Activated T-helper 2 cell treated with anti-CD3 and anti-CD28 coated beads, Interferon-gamma antibody, Interleukin-2, Interleukin-4, amounts not matched to agents 10 μg/mL and 5 μg/mL and 100 μg/mL, durations not matched to agents 14 hours and 24 hours and 36 hours (primary cell): ENCODE measurements at regions of chr6 and their contacts with region 1.

Region 1: DNA sequence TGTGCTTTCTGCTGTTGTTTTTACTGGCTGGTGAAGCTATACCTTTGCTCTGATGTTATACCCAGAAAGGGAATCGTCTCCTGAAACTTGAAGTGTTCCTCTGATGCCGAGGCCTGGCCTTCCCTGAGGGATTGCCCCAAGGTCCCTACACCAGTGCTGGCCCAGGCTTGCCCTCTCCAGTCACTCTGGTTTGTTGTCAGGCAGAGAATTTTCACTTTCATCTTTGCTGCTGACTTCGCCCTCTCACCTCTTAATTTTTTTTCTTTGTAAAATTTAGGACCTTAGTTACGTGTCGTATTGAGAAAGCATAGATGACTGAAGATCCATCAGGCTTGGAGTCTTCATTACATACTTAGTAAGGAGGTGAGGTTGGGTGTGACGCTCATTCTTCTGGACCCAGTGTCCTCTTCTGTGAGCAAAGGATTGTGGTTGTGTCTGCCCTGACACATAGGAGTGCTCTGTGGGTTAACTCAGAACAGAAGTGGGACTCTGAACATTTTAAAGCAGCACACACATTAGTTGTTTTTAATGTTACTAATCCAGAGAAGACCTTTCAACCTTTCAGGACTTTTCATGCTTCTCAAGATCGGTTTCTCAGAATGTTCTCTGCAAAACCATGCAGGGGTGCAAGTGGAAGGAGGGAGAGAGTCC is 45.4 kb downstream of the TULP4 start:
- DNase-seq: no peak
- H3K4me3 Mint-ChIP-seq: peak overlapping the region; percentile 41
- H3K27ac Mint-ChIP-seq: peak overlapping the region; percentile 78
- H3K4me1 Mint-ChIP-seq: peaks cover 41% of the 10 kb centered on the region
- H3K27me3 Mint-ChIP-seq: no peaks in the 10 kb centered on the region

Region 2: DNA sequence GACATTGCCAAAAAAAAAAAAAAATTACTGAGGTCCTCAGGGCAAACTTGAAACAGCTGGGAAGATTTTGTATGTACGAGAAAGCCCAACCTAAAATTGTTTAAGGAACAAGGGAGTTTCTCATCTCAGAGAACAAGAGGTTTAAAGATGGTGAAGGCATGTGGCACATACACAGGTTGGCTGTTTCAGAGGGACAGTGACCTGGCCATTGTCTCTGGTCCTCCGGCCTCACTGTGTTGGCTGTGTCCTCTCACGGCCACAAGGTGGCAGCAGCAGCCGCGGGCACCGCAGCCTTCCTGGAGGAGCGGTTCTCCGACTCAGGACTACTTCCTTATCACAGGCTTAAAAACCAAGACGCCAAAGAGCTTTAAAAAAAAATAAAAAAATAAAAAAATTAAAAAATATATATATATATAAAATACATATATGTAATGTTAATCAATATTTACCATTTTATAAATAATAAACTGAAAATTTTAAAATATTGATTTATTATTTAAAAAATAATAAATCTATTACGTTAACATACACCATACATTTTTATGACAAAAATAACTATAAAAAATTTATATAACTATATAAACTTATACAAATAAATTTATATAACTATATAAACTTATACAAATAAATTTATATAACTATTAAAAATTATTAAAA is 136.8 kb before region 1 on chr6:
- intact Hi-C with region 1: loop called (anchors 5 kb)
- DNase-seq: peak; percentile 61
- H3K4me3 Mint-ChIP-seq: no peak overlapping the region
- H3K27ac Mint-ChIP-seq: no peak overlapping the region
- H3K4me1 Mint-ChIP-seq: no peaks in the 10 kb centered on the region
- H3K27me3 Mint-ChIP-seq: no peaks in the 10 kb centered on the region

Region 3: DNA sequence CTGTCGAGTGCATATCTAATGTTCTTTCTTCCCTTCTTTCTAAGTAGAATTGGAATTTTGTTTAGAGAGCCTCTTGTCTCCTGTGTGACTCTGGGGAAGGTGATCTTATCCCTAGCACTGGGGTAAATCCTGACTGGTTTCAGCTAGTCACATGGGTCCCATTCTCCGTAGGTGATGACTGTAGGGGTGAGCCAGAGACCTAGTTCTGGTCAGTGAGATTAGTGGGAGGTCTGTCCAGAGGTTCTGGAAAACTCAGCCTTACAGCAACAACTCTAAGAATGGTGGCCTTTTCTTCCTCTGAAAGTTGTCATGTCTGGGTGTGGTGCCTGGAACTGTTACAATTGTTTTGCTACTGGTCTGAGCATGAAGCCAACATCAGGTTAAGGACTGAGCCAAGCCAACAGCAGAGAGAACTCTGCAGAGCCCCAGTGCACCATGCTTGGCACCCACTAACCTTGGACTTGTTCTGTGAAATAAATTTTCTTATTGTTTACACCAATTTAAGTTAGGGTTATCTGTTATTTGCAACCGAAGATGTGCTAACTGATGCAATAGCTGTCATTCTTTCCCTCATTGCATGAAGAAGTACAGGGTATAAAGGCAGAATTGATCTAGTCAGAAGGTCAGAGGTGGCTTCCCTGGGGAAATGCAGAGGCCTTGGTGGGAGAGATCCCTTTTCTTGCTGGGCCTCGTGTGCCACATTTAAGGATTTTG is 102.3 kb before region 1 on chr6:
- intact Hi-C with region 1: no loop called
- DNase-seq: no peak
- H3K4me3 Mint-ChIP-seq: no peak overlapping the region
- H3K27ac Mint-ChIP-seq: no peak overlapping the region
- H3K4me1 Mint-ChIP-seq: peaks cover 14% of the 10 kb centered on the region
- H3K27me3 Mint-ChIP-seq: no peaks in the 10 kb centered on the region

Region 4: GRCh38 chr6:158270389-158271127 is 87.1 kb before region 1 on chr6:
- intact Hi-C with region 1: loop called (anchors 2 kb)
- DNase-seq: no peak
- H3K4me3 Mint-ChIP-seq: no peak overlapping the region
- H3K27ac Mint-ChIP-seq: peak overlapping the region; percentile 49
- H3K4me1 Mint-ChIP-seq: peaks cover 25% of the 10 kb centered on the region
- H3K27me3 Mint-ChIP-seq: no peaks in the 10 kb centered on the region

Region 5: DNA sequence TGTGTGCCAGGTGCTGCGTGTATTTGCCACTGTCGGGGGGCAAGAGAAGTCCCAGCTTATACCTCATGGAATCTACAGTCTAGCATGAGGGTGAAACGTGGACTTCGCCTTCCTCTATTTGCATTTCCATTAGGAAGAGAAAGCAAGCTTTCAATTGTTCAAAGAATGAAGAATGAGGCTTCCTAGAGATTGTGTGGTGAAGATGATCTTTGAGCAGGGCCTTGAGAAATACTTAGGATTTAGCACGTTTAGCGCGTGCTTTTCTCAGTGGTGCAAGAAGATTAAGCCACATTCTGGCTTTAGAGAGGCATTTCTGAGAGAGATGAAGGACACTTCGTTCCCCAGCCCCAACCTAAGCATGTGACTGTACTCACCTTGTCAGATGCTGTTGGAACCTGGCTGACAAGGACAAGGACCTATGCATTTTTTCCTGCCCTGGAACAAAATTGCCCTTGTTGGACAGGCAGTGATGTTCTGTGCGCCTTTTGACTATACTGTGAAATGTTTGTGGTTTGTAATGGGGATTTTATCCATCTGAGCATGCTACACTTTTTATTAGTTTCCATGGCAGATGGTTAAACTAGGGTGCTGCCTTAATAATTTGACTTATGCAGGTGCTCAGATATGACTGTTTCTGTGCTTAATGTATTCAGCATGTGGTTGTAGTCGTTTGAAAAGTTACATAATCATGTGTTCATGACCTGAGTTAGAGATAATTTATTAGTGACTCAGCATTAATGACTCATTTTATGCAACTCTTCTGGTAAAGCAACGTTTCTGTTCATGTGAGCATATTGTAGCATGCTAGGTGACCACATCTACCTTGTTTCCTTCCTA is 34.7 kb before region 1 on chr6:
- intact Hi-C with region 1: loop called (anchors 5 kb)
- DNase-seq: no peak
- H3K4me3 Mint-ChIP-seq: no peak overlapping the region
- H3K27ac Mint-ChIP-seq: peak overlapping the region; percentile 8
- H3K4me1 Mint-ChIP-seq: peaks cover 52% of the 10 kb centered on the region
- H3K27me3 Mint-ChIP-seq: no peaks in the 10 kb centered on the region

Region 6: GRCh38 chr6:158518191-158519127 is 160.8 kb after region 1 on chr6:
- intact Hi-C with region 1: loop called (anchors 5 kb)
- DNase-seq: peak; percentile 66
- H3K4me3 Mint-ChIP-seq: peak overlapping the region; percentile 81
- H3K27ac Mint-ChIP-seq: peak overlapping the region; percentile 72
- H3K4me1 Mint-ChIP-seq: peaks cover 32% of the 10 kb centered on the region
- H3K27me3 Mint-ChIP-seq: peaks cover 13% of the 10 kb centered on the region